Activated CD4-positive, alpha-beta T cell treated with anti-CD3 and anti-CD28 coated beads, Interleukin-2, amount 10 ng/mL, durations not matched to agents 7 days and 5 days (primary cell): ENCODE measurements at regions of chr7 and their contacts with region 1.

Region 1: DNA sequence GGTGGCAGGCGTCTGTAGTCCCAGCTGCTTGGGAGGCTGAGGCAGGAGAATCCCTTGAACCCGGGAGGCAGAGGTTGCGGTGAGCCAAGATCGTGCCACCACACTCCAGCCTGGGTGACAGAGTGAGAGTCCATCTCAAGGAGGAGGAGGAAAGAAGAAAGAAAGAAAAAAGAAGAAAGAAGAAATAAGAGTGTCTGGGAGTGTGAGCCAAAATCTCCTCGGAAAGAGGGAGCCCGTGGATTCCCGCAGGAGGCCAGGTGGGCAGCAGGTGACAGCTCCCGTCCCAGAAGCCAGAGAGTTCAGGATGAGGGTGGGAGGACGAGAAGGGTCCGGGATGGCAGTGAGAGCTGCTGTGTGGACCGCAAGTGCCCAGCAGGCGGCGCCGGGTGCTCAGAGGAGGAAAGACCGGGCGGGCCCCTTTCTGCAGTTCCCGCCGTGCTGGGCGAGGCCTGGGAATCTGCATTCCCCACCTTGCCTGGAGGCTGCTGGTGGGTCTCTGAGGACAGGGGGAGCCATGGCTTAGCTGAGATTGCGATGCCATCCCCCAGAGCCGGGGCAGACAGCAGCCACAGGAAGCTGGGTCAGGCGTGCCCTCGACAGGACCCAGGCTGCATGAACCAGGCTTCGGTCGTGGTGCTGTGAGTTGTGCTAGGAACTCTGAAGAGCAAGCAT is 17.1 kb upstream of the AMZ1 start:
- DNase-seq: peak; percentile 68
- H3K4me3 Mint-ChIP-seq: no peak overlapping the region
- H3K27ac Mint-ChIP-seq: peak overlapping the region; percentile 54
- H3K4me1 Mint-ChIP-seq: peaks cover 8% of the 10 kb centered on the region
- H3K27me3 Mint-ChIP-seq: peaks cover 45% of the 10 kb centered on the region

Region 2: DNA sequence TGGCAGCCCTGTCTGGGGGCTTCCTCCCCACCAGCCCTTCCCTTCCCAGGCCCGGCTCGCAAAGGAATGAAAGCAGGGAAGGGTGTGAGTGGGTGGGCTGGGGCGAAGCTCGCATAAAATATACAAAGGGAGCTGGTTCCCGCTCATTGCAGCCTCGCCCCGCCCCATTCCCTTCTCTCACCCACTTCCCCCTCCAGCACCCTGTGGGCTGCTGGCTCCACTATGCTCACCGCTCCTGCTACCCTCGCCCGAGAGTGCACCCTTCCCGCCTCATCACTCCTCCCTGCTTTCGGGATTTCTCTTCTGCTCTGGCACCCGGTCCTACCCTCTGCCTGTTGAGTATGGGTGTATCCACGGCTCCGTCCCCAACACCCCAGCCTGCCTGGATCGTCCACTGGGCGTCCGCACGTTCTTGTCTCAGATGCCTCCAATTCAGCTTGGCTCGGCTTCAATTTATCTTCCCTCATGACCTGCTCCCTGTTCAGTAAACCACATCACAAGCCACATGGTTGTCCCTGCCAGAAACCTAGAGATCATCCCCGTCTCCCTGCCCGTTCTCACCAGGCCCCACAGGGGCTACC is 53.4 kb before region 1 on chr7:
- CTCF ChIA-PET with region 1: no interaction called
- POLR2A ChIA-PET with region 1: no interaction called
- DNase-seq: no peak
- H3K4me3 Mint-ChIP-seq: no peak overlapping the region
- H3K27ac Mint-ChIP-seq: no peak overlapping the region
- H3K4me1 Mint-ChIP-seq: no peaks in the 10 kb centered on the region
- H3K27me3 Mint-ChIP-seq: peaks cover 6% of the 10 kb centered on the region

Region 3: GRCh38 chr7:2680792-2681490 is 10.1 kb after region 1 on chr7:
- CTCF ChIA-PET with region 1: interaction called, 11 read pairs
- POLR2A ChIA-PET with region 1: no interaction called
- DNase-seq: peak; percentile 56
- H3K4me3 Mint-ChIP-seq: no peak overlapping the region
- H3K27ac Mint-ChIP-seq: no peak overlapping the region
- H3K4me1 Mint-ChIP-seq: no peaks in the 10 kb centered on the region
- H3K27me3 Mint-ChIP-seq: peaks cover 5% of the 10 kb centered on the region

Region 4: GRCh38 chr7:2698581-2699288 is 27.9 kb after region 1 on chr7:
- CTCF ChIA-PET with region 1: interaction called, 13 read pairs
- POLR2A ChIA-PET with region 1: no interaction called
- DNase-seq: peak; percentile 86
- H3K4me3 Mint-ChIP-seq: peak overlapping the region; percentile 56
- H3K27ac Mint-ChIP-seq: peak overlapping the region; percentile 76
- H3K4me1 Mint-ChIP-seq: peaks cover 38% of the 10 kb centered on the region
- H3K27me3 Mint-ChIP-seq: peaks cover 7% of the 10 kb centered on the region

Region 5: DNA sequence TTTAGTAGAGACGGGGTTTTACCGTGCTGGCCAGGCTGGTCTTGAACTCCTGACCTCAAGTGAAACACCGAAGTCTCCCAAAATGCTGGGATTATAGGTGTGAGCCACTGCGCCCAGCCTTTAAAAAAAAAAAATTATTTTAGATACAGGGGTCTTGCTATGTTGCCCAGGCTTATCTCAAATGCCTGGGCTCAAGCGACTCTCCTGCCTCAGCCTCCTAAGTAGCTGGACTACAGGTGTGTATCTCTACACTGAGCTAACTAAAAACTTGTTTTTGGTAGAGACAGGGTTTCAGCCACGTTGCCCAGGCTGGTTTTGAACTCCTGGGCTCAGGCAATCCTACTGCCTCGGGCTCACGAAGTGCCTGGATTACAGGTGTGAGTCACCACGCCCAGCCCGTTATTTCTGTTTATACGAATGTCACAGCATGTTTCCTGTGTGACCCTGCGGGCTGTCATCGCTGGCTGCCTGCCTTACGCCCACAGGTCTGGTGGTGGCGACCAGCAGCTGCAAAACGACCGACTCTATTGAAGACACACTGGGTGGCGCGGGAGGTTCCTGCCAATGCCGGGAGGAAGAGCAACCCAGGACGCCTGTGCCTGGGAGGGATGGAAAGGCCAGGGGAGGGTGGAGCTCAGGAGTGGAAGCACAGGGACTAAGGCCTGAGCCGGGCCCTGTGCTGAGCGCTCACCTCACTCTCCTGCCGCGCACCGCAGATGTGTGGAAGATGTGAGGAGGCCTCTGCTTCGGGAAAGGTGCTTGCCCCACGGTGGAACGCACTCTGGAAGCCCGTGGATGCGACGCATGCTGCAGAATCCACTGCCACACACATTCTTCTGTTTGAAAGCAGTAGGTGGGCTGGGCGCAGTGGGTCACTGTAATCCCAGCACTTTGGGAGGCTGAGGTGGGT is 50.0 kb after region 1 on chr7:
- CTCF ChIA-PET with region 1: interaction called, 21 read pairs
- POLR2A ChIA-PET with region 1: no interaction called
- DNase-seq: peak; percentile 68
- H3K4me3 Mint-ChIP-seq: no peak overlapping the region
- H3K27ac Mint-ChIP-seq: peak overlapping the region; percentile 77
- H3K4me1 Mint-ChIP-seq: peaks cover 50% of the 10 kb centered on the region
- H3K27me3 Mint-ChIP-seq: no peaks in the 10 kb centered on the region

Region 6: GRCh38 chr7:2886900-2887299 is 216.0 kb after region 1 on chr7:
- CTCF ChIA-PET with region 1: no interaction called
- POLR2A ChIA-PET with region 1: no interaction called
- DNase-seq: peak; percentile 69
- H3K4me3 Mint-ChIP-seq: no peak overlapping the region
- H3K27ac Mint-ChIP-seq: no peak overlapping the region
- H3K4me1 Mint-ChIP-seq: peaks cover 4% of the 10 kb centered on the region
- H3K27me3 Mint-ChIP-seq: no peaks in the 10 kb centered on the region